ENCODE measurements at regions of chr16 and their contacts with region 1.

Region 1: DNA sequence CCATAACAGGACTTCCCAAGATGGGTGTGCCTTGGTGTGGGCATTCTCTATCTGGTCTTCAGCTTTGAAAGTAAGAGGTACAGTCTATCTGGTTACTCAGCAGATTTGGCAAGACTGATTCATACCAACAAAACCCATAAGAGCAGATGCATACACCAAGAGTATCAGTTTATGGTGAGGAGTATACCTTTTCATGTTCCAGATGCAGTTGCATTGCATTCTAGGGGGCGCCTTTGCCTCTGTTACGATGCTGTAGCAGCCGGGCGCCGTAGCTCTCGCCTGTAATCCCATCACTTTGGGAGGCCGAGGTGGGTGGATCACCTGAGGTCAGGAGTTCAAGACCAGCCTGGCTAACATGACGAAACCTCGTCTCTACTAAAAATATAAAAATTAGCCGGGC is 31.1 kb upstream of the CARMIL2 start:
- DNase-seq: no peak
- ATAC-seq: no peak
- H3K4me3 ChIP-seq: no peak overlapping the region
- H3K27ac ChIP-seq: no peak overlapping the region
- H3K4me1 ChIP-seq: no peaks in the 10 kb centered on the region
- H3K27me3 ChIP-seq: no peaks in the 10 kb centered on the region
- CTCF ChIP-seq: no peak
- POLR2A ChIP-seq: no peak

Region 2: DNA sequence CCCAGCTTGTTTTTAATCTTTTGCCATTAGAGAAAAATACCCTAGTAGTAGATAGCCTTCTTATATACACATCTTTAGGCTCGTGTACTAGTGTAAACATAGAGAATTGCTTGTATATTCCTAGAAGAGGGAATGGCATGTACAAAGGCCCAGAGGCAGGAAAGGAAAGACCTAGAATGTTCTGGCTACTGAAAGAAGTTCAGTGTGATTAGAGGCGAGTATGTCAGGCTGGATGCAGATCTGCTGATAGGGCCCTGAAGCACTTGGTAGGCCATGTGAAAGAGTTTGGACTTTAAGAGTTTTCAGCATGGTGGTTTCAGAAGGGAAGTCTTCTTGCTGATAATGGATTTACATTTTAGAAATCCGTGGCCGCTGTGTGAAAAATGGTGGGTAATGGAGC is 34.1 kb before region 1 on chr16:
- intact Hi-C with region 1: loop called in 1 of 10 experiments (anchors 5 kb)
- DNase-seq: no peak
- ATAC-seq: no peak
- H3K4me3 ChIP-seq: no peak overlapping the region
- H3K27ac ChIP-seq: no peak overlapping the region
- H3K4me1 ChIP-seq: peaks cover 0 to under 1% (median 0%) of the 10 kb centered on the region in 12 donors
- H3K27me3 ChIP-seq: no peaks in the 10 kb centered on the region
- CTCF ChIP-seq: no peak
- POLR2A ChIP-seq: no peak

Region 3: DNA sequence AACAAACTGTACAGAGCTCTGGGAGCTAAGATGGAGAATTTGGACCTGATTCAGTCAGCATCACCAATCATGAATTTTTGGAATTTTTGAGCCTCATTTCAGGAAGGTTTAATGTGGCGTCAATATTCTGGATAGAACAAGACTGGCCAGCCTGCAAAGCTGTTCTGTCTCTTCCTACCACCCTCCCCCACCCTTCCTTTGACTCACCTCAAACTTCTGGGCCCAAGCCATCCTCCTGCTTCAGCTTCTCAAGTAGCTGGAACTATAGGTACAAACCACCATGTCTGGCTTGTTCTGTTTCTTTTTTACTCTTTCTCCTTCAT is 18.8 kb before region 1 on chr16:
- intact Hi-C with region 1: no loop called
- DNase-seq: no peak
- ATAC-seq: peak in 1 of 4 donors; percentile 50
- H3K4me3 ChIP-seq: no peak overlapping the region
- H3K27ac ChIP-seq: no peak overlapping the region
- H3K4me1 ChIP-seq: peaks cover 0 to 29% (median 0%) of the 10 kb centered on the region in 12 donors
- H3K27me3 ChIP-seq: no peaks in the 10 kb centered on the region
- CTCF ChIP-seq: no peak
- POLR2A ChIP-seq: no peak

Measured in heart left ventricle (tissue), 16 donors.